ENCODE measurements at regions of chr9 and their contacts with region 1.

Region 1: DNA sequence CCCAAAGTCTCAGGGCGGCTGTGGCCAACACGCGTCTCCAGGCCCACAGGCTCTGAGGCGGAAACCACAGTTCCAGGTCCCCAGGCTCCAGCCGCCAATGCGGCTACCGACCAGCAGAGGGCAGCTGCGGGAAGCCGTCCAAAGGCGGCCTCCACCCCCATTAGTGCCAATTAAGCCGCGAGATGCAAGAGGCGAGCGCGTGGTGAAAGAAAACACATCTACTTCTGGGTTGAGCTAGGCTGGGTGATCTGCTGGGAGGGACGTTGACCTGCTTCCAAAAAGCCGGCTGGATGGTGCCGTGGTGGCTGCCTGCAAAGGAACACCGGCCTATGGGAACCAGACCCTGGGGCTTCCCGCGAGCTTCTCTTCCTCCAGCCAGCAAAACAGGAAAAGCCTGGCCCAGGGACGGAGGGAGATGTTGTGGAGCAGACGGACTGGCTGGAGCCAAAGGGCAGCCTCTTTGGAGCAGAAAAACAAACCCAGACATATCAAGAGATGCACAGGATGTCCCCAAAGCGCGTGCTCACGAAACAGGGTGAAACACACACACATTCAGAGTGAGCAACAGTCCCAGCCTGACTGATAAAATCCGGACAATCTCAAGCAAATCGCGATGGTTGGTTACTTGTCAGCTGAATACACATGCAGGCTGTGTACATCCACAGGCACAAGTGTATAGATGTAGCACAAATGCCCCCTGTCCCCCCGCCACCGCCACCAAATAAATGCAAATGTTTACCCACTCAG is 187.1 kb upstream of the BRINP1 start:
- H3K4me3 Mint-ChIP-seq: no peak overlapping the region
- H3K27ac Mint-ChIP-seq: no peak overlapping the region
- H3K4me1 Mint-ChIP-seq: peaks cover 6% of the 10 kb centered on the region
- H3K27me3 Mint-ChIP-seq: peaks cover 8% of the 10 kb centered on the region

Region 2: GRCh38 chr9:120348951-120349429 is 792.7 kb after region 1 on chr9:
- intact Hi-C with region 1: loop called (anchors 5 kb)
- H3K4me3 Mint-ChIP-seq: no peak overlapping the region
- H3K27ac Mint-ChIP-seq: no peak overlapping the region
- H3K4me1 Mint-ChIP-seq: no peaks in the 10 kb centered on the region
- H3K27me3 Mint-ChIP-seq: peaks cover 15% of the 10 kb centered on the region

Region 3: DNA sequence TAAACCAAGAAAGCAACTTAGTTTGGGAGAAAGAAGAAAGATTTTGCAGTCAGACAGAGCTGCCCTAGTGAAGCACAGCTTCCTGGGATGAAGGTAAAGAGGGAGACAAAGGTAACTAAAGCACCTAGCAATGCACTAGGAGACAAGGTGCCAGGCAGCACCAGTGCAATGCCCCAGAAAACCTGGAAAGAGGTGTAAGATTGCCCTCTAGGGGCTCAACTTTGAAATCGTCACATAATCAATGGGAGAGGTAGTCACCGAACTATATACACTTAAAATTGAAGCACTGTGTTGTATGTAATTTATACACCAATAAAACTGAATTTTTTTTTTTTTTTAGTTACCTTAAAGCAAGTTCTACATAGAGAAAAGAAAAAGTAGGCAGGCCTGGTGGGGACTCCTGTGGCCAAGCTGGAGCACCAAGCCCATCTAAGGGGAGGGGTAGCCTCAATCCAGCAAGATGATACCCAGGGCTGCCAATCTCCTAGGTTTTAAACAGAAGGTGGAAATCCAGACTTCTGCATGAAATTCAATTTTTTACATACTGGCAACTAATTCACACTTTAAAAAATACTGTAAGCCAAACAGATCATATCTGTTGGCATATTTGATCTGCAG is 975.5 kb after region 1 on chr9:
- intact Hi-C with region 1: loop called (anchors 5 kb)
- H3K4me3 Mint-ChIP-seq: no peak overlapping the region
- H3K27ac Mint-ChIP-seq: no peak overlapping the region
- H3K4me1 Mint-ChIP-seq: peaks cover 14% of the 10 kb centered on the region
- H3K27me3 Mint-ChIP-seq: no peaks in the 10 kb centered on the region

Measured in dendritic cell treated with granulocyte-macrophage colony-stimulating factor and Interleukin-4, amounts not matched to agents 40 ng/mL and 50 ng/mL, for 4 days (primary cell).